Left ventricle myocardium superior (tissue), 1 donor: ENCODE measurements at regions of chr2 and their contacts with region 1.

Region 1: DNA sequence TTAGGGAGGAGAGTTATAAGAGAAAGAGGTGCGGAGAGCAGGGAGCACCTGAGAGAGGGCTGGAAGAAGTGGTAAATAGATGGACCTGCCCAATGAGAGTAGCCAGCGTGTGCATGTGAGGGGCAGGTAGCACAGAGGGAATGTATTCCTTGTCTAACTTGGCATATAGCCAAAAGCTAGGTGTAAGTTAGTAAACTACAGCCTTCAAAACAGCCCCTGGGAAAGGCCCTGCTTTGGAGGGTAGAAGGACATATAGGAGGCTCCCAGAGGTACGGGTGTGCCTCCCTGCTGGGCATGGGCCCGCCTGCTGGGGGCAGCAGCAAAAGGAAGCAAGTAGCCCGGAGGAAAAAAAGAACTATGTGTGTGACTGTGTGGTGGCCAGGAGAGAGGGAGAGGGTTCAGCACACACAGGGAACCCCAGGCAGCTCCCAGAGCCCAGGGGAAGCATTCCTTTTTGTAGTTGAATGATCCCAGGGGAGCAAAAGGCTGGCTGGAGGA is 48.0 kb downstream of the TCF7L1 start:
- DNase-seq: no peak
- ATAC-seq: peak; percentile 41

Region 2: DNA sequence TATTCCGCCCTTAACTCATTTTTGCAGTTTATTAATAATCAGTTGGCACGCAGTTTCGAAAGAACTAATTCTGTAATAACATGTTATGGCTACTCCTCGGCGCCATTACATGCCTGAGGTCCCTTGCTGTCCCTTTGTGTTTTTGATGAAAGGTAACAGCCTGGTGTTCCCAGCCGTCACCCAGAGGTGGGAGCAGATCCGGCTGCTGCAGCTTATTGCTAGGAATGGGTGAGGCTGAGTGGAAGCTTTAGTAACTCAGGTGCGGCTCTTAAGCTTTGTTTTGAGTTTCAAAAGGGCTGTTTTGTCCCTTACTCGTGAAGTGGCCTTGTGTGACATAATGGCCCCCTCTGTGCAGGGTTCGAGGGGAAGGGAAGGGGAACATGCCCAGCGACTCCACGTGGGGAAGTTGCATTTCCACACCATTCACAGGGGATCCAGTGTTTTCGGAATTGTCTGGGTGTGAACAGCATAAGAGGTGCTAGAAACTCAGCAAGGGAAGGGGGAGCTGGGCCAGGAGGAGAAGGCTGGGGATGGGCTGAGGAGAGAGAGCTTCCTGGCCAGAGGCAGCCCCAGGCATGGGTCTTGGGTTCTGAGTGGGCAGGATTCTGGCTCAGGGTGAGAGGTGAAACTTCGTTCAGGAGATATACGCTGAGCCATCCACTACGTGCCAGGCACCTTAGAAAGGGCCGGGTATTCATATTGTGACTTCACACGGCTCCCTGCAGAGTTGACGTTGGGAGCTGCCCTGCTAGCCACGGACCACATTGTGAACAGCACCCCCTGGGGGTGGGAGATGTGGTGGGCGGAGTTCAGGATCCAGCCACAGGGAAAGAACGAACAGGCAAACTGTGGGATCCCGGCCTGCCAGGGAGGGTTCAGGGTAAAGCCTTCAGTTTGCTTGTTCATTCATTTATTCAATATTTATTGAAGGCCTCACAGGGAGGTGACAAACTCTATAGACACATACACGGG is 62.2 kb after region 1 on chr2:
- intact Hi-C with region 1: loop called (anchors 10 kb)
- DNase-seq: peak; percentile 68
- ATAC-seq: peak; percentile 66